GM12878 (cell line): ENCODE measurements at regions of chr14 and their contacts with region 1.

Region 1: GRCh38 chr14:102694530-102695166 is 82.6 kb upstream of the TRAF3 start:
- DNase-seq: peak; percentile 43
- ATAC-seq: peak; percentile 87
- H3K4me3 ChIP-seq: no peak overlapping the region
- H3K27ac ChIP-seq: no peak overlapping the region; the same call in 1 of the 2 replicates
- H3K4me1 ChIP-seq: peaks cover 15% of the 10 kb centered on the region
- H3K27me3 ChIP-seq: no peaks in the 10 kb centered on the region
- CTCF ChIP-seq: peak; percentile 50 to 71 (median 64); a peak in 5 of 6 replicates
- EP300 ChIP-seq: no peak
- POLR2A ChIP-seq: no peak
- RAD21 ChIP-seq: peak; percentile 85

Region 2: GRCh38 chr14:102437997-102438915 is 256.4 kb before region 1 on chr14:
- CTCF ChIA-PET with region 1: interaction called, 18 read pairs
- POLR2A ChIA-PET with region 1: no interaction called
- RAD21 ChIA-PET with region 1: interaction called, 8 read pairs
- SMC1A ChIA-PET with region 1: interaction called, 3 read pairs
- in situ Hi-C with region 1: no loop called
- intact Hi-C with region 1: loop called (anchors 10 kb)
- DNase-seq: peak; percentile 37
- ATAC-seq: peak; percentile 99
- H3K4me3 ChIP-seq: no peak overlapping the region
- H3K27ac ChIP-seq: no peak overlapping the region
- H3K4me1 ChIP-seq: no peaks in the 10 kb centered on the region; the same call in 1 of the 2 replicates
- H3K27me3 ChIP-seq: peaks cover 0 to 1% of the 10 kb centered on the region in 2 experiments; a peak in 1 of 4 replicates
- CTCF ChIP-seq: peak; percentile 65 to 88 (median 80)
- EP300 ChIP-seq: no peak
- POLR2A ChIP-seq: no peak
- RAD21 ChIP-seq: peak; percentile 75

Region 3: DNA sequence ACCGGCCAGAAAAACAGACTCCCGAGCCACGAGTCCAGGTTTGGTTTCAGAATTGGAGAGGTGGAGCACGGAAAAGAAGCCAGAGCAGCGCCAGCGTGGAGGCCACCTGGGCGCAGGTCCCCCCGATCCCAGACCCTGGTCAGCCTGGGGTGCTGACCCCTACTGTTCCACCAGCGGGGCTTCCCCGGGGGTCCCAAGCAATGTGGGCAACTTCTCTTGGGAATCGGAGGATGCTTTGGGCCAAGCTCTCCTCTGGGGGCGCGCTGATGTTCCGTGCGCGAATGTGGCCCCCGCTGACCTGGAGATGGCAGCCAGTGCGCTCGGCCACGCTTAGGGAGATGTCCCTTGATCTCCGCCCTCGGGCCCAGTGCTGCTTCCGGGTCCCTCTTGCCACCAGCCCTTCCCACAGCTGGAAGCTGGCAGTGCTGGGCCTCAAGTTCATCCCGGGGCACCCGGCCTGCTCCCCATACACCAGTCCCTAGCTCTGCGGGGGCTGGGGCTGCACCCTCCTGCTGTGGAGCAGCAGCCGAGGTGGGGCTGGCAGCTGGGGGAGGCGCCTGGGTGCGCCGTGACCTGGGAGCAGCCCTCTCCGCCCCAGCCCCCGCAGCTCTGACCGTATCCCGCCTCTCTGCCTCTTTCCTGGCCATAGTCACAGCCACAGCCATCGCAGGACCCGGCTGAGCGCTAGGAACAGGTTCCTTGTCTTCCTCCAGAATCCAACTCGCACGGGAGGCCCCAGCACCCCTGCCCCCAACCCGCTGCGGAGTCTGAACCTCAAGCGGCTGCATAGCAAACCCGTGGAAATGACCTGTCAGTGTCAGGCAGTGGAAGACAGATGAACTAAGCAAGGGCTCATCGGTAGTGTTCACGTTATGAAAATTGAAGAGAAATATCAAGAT is 11.0 kb before region 1 on chr14:
- CTCF ChIA-PET with region 1: interaction called, 14 read pairs
- POLR2A ChIA-PET with region 1: interaction called, 6 read pairs
- RAD21 ChIA-PET with region 1: interaction called, 4 read pairs
- SMC1A ChIA-PET with region 1: interaction called, 18 read pairs
- in situ Hi-C with region 1: no loop called
- intact Hi-C with region 1: no loop called
- DNase-seq: no peak
- ATAC-seq: no peak
- H3K4me3 ChIP-seq: no peak overlapping the region
- H3K27ac ChIP-seq: no peak overlapping the region
- H3K4me1 ChIP-seq: no peaks in the 10 kb centered on the region
- H3K27me3 ChIP-seq: no peaks in the 10 kb centered on the region
- CTCF ChIP-seq: no peak
- EP300 ChIP-seq: no peak
- POLR2A ChIP-seq: no peak
- RAD21 ChIP-seq: no peak

Region 4: DNA sequence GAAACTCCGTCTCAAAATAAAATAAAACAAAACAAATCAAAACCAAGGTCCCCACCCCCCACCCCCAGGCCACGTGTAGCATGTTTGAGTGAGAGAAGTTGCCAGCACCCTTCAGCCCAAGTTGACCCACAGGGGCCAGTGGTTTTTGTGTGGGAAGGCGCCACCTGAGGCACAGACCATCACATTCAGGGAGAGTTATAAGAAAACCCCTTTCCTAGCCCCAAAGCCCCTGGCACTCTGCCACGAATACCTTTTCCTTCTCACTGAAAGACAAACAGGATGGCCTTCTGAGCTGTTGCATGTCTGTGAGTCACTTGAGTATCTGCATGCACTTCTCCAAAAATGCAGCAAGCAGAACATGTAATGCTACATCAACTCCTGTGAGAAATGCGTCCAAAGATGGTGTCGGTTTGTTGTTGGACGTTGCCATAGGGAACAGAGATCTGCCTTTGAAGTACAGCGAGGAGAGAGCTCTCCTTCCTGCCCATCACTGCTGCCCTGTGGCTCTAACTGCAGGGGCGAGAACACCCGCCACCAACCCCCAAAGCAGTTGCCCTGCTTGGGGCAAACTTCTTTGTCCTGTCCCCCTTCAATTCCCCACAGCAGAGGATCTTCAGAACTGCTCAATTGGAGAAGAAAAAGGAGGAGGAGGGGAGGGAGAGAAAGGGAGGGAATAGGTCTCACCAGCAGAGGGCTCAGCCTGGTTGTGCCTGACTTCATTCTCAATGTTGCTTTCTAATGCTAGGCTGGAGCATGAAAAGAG is 79.9 kb after region 1 on chr14:
- CTCF ChIA-PET with region 1: interaction called, 107 read pairs
- POLR2A ChIA-PET with region 1: interaction called, 11 read pairs
- RAD21 ChIA-PET with region 1: interaction called, 104 read pairs
- SMC1A ChIA-PET with region 1: interaction called, 119 read pairs
- in situ Hi-C with region 1: no loop called
- intact Hi-C with region 1: loop called (anchors 1 kb)
- DNase-seq: peak; percentile 96
- ATAC-seq: peak; percentile 76
- H3K4me3 ChIP-seq: peak overlapping the region; percentile 35; the same call in 1 of the 2 replicates
- H3K27ac ChIP-seq: peak overlapping the region; percentile 89
- H3K4me1 ChIP-seq: peaks cover 40% of the 10 kb centered on the region
- H3K27me3 ChIP-seq: no peaks in the 10 kb centered on the region
- CTCF ChIP-seq: peak; percentile 77 to 86 (median 85)
- EP300 ChIP-seq: peak; percentile 32 to 75; a peak in 2 of 4 replicates
- POLR2A ChIP-seq: no peak
- RAD21 ChIP-seq: peak; percentile 77

Region 5: DNA sequence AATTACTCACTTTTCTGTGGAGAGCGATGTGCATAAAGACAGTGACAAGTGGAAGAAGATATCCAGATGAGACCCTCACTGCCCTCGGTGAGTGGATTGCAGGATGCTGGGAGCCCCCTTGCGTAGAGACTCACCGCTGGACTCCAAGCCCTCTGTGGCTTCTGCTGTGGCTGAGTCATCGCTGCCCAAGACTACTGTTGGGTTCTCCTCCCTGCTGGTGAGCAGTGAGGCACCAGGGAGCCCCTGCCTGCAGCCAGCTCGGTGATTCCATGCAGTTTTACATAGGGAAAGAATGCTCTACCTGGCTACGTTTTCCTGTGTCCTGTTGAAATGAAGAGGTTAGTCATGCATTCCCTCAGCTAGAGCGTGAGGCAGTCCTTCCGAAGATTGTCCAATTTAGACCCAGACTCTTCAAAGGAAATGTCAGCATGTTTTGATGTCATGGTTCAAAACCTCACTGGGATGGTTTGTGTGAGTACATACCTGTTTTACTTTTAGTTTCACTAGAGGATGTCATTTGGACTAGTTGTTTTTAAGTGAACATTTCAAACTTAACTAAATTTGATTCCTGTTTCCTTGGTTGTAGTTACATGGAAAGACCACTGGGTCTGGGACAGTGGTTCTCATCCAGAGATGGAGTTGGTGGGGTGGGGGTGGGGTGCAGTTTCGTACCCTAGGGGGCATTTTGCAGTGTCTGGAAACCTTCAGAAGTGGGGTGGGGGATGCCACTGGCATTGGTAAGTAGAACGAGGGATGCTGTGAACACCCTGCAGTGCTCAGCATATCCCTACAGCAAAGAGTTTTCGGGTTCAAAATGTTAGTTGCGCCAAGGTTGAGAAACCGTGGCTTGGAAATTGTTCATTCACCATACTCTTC is 111.0 kb after region 1 on chr14:
- CTCF ChIA-PET with region 1: no interaction called
- POLR2A ChIA-PET with region 1: interaction called, 11 read pairs
- RAD21 ChIA-PET with region 1: interaction called, 4 read pairs
- SMC1A ChIA-PET with region 1: interaction called, 8 read pairs
- in situ Hi-C with region 1: no loop called
- intact Hi-C with region 1: no loop called
- DNase-seq: no peak
- ATAC-seq: peak; percentile 73
- H3K4me3 ChIP-seq: peak overlapping the region; percentile 43; the same call in 1 of the 2 replicates
- H3K27ac ChIP-seq: peak overlapping the region; percentile 78
- H3K4me1 ChIP-seq: peaks cover 77% of the 10 kb centered on the region
- H3K27me3 ChIP-seq: no peaks in the 10 kb centered on the region
- CTCF ChIP-seq: 0 out of 6 replicates have a peak, but pooled peaks of 2 of the 3 experiments have one; percentile 0 to 7
- EP300 ChIP-seq: no peak
- POLR2A ChIP-seq: peak; percentile 25; the same call in 1 of the 2 replicates
- RAD21 ChIP-seq: no peak

Region 6: GRCh38 chr14:102900631-102901571 is 206.3 kb after region 1 on chr14:
- CTCF ChIA-PET with region 1: interaction called, 25 read pairs
- POLR2A ChIA-PET with region 1: interaction called, 3 read pairs
- RAD21 ChIA-PET with region 1: interaction called, 26 read pairs
- SMC1A ChIA-PET with region 1: interaction called, 9 read pairs
- in situ Hi-C with region 1: no loop called
- intact Hi-C with region 1: no loop called
- DNase-seq: no peak
- ATAC-seq: peak; percentile 76
- H3K4me3 ChIP-seq: peak overlapping the region; percentile 43
- H3K27ac ChIP-seq: peak overlapping the region; percentile 98
- H3K4me1 ChIP-seq: peaks cover 59% of the 10 kb centered on the region
- H3K27me3 ChIP-seq: no peaks in the 10 kb centered on the region
- CTCF ChIP-seq: no peak
- EP300 ChIP-seq: no peak; a peak in 2 of 4 replicates
- POLR2A ChIP-seq: peak; percentile 61
- RAD21 ChIP-seq: no peak

Region 7: GRCh38 chr14:103057365-103058096 is 362.9 kb after region 1 on chr14 and contains the start of gene CDC42BPB:
- CTCF ChIA-PET with region 1: interaction called, 3 read pairs
- POLR2A ChIA-PET with region 1: no interaction called
- RAD21 ChIA-PET with region 1: no interaction called
- SMC1A ChIA-PET with region 1: no interaction called
- in situ Hi-C with region 1: no loop called
- intact Hi-C with region 1: loop called (anchors 10 kb)
- DNase-seq: no peak
- ATAC-seq: peak; percentile 93
- H3K4me3 ChIP-seq: peak within 1 kb of the TSS; percentile 86
- H3K27ac ChIP-seq: peak within 1 kb of the TSS; percentile 22; the same call in 1 of the 2 replicates
- H3K4me1 ChIP-seq: peaks cover 2% of the 10 kb centered on the region
- H3K27me3 ChIP-seq: no peaks in the 10 kb centered on the region
- CTCF ChIP-seq: no peak
- EP300 ChIP-seq: no peak
- POLR2A ChIP-seq: no peak
- RAD21 ChIP-seq: no peak
- polyA plus RNA-seq, gene CDC42BPB: 0.42 to 0.46 TPM